ENCODE measurements at regions of chr20 and their contacts with region 1.

Region 1: GRCh38 chr20:50790651-50791277 is 4.1 kb upstream of the BCAS4 start:
- DNase-seq: peak; percentile 62 to 80 (median 77)
- ATAC-seq: peak; percentile 68
- H3K4me3 ChIP-seq: peak overlapping the region; percentile 40
- H3K4me3 Mint-ChIP-seq: peak overlapping the region in 4 of 10 donors; percentile 27 to 63 (median 39)
- H3K27ac ChIP-seq: peak overlapping the region; percentile 69
- H3K27ac Mint-ChIP-seq: peak overlapping the region in 8 of 9 donors; percentile 63 to 86 (median 78)
- H3K4me1 ChIP-seq: peaks cover 11 to 16% of the 10 kb centered on the region in 2 donors
- H3K4me1 Mint-ChIP-seq: peaks cover 0 to 28% (median 15%) of the 10 kb centered on the region in 7 donors
- H3K27me3 ChIP-seq: no peaks in the 10 kb centered on the region
- H3K27me3 Mint-ChIP-seq: no peaks in the 10 kb centered on the region

Region 2: DNA sequence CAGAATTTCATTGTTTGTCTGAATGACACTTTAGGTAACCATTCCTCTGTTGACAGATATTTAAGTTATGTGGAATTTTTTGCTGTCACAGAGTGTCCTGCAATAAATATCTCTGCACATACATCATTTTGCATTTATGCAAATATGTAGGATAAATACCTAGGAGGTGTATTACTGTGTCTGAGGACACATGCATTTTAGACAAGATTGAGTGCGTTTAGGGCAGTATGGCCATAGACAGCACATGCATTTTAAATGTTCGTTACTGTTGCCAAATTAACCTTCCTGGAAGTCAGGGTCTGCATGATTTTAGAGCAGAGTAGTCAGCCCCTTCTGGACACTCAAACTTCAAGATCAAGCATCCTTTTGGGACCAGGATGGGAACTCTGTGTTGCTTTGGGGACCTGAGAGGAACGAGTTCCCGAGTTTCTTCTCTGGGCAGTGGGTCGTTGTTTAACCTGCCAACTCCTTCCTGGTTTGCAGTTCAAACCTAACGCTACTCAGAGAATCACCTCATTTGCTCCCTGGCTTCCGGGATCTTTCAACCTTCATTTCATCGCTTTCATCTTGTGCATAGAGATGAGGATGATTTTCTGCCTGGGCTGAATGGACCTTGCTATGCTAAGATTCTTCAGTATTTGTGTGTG is 13.8 kb after region 1 on chr20:
- CTCF ChIA-PET with region 1: interaction called, 10 read pairs
- POLR2A ChIA-PET with region 1: interaction called, 9 read pairs
- intact Hi-C with region 1: loop called in 1 of 2 experiments (anchors 1 kb)
- DNase-seq: peak in 7 of 9 donors; percentile 47 to 67 (median 56)
- ATAC-seq: peak; percentile 84
- H3K4me3 ChIP-seq: peak overlapping the region; percentile 17
- H3K4me3 Mint-ChIP-seq: peak overlapping the region; percentile 38 to 83 (median 66)
- H3K27ac ChIP-seq: peak overlapping the region; percentile 64
- H3K27ac Mint-ChIP-seq: peak overlapping the region; percentile 84 to 96 (median 91)
- H3K4me1 ChIP-seq: peaks cover 15 to 16% of the 10 kb centered on the region in 2 donors
- H3K4me1 Mint-ChIP-seq: peaks cover 14 to 45% (median 44%) of the 10 kb centered on the region in 7 donors
- H3K27me3 ChIP-seq: no peaks in the 10 kb centered on the region
- H3K27me3 Mint-ChIP-seq: no peaks in the 10 kb centered on the region

Region 3: DNA sequence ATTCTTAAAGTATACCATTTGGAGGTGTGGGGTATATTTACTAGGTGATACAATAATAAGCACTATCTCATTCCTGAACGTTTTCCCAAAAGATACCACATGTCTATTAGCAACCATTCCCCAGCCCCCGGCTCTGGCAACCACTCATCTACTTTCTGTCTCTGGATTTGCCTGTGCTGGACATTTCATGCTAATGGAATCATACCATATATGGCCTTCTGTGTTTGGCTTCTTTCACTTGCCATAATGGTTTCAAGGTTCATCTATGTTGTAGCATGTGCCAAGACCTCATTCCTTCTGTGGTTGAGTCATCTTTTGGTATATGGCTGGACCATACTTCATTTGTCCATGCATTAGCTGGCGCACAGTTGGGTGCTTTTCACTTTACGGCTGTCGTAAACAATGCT is 43.8 kb after region 1 on chr20:
- CTCF ChIA-PET with region 1: interaction called, 4 read pairs
- POLR2A ChIA-PET with region 1: interaction called, 4 read pairs
- intact Hi-C with region 1: loop called in 1 of 2 experiments (anchors 5 kb)
- DNase-seq: no peak
- ATAC-seq: no peak
- H3K4me3 ChIP-seq: no peak overlapping the region
- H3K4me3 Mint-ChIP-seq: no peak overlapping the region
- H3K27ac ChIP-seq: no peak overlapping the region
- H3K27ac Mint-ChIP-seq: no peak overlapping the region
- H3K4me1 ChIP-seq: no peaks in the 10 kb centered on the region
- H3K4me1 Mint-ChIP-seq: peaks cover 0 to 12% (median 0%) of the 10 kb centered on the region in 7 donors
- H3K27me3 ChIP-seq: no peaks in the 10 kb centered on the region
- H3K27me3 Mint-ChIP-seq: no peaks in the 10 kb centered on the region

Region 4: DNA sequence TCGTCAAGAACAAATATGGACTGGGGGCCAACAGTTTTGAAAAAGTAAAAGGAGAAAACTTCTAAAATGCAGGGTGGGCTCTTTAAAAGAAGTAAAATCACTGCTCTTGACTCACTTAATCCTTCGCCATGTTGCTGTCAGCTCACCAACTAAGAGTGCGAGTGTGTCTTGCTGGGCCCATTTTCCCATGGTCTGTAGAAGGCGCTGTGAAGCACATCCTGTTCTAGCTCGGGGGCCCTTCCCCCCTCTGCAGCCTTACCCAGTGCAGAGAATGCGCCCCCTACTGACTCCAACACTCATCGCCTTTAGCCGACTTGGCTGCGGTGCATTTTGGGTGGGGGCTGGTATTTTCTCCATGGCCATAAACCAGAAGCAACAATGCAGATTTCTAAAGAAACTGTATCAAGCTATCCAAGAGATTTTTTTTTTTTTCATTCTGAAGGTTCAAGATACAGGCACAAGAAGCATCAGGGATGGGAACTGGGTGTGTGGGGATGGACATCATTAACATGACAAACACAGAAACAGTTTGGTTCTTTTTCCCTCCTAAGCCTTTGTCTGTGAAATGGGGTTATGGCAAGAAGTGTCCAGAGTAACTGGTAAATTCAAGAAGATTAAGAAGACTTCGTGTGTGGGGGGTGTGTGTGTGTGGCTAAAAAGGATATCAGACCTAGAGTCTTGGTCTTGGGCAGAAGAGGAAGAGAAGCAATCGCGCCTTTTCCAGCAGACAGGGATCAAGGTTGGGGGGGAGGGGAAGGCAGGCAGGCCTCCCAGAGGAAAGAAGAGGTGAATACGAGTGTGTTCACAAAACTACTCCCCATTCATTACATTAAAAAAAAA is 138.8 kb after region 1 on chr20:
- CTCF ChIA-PET with region 1: interaction called, 147 read pairs
- POLR2A ChIA-PET with region 1: interaction called, 79 read pairs
- intact Hi-C with region 1: loop called (anchors 1 kb)
- DNase-seq: peak; percentile 74 to 95 (median 93)
- ATAC-seq: peak; percentile 84
- H3K4me3 ChIP-seq: peak overlapping the region; percentile 52
- H3K4me3 Mint-ChIP-seq: peak overlapping the region; percentile 88 to 98 (median 94)
- H3K27ac ChIP-seq: peak overlapping the region; percentile 63
- H3K27ac Mint-ChIP-seq: peak overlapping the region; percentile 85 to 99 (median 96)
- H3K4me1 ChIP-seq: peaks cover 37 to 38% of the 10 kb centered on the region in 2 donors
- H3K4me1 Mint-ChIP-seq: peaks cover 37 to 62% (median 57%) of the 10 kb centered on the region in 7 donors
- H3K27me3 ChIP-seq: no peaks in the 10 kb centered on the region
- H3K27me3 Mint-ChIP-seq: no peaks in the 10 kb centered on the region

Region 5: GRCh38 chr20:50980851-50981713 is 190.3 kb after region 1 on chr20:
- CTCF ChIA-PET with region 1: interaction called, 3 read pairs
- POLR2A ChIA-PET with region 1: interaction called, 3 read pairs
- intact Hi-C with region 1: loop called (anchors 1 to 2 kb)
- DNase-seq: peak; percentile 20 to 61 (median 47)
- ATAC-seq: peak; percentile 67
- H3K4me3 ChIP-seq: no peak overlapping the region
- H3K4me3 Mint-ChIP-seq: peak overlapping the region in 2 of 10 donors; percentile 34 to 47
- H3K27ac ChIP-seq: no peak overlapping the region
- H3K27ac Mint-ChIP-seq: no peak overlapping the region
- H3K4me1 ChIP-seq: peaks cover 0 to 5% of the 10 kb centered on the region in 2 donors
- H3K4me1 Mint-ChIP-seq: peaks cover 0 to 9% (median 4%) of the 10 kb centered on the region in 7 donors
- H3K27me3 ChIP-seq: peaks cover 0 to 3% of the 10 kb centered on the region in 2 donors
- H3K27me3 Mint-ChIP-seq: peaks cover 21 to 52% (median 35%) of the 10 kb centered on the region in 5 donors

Region 6: DNA sequence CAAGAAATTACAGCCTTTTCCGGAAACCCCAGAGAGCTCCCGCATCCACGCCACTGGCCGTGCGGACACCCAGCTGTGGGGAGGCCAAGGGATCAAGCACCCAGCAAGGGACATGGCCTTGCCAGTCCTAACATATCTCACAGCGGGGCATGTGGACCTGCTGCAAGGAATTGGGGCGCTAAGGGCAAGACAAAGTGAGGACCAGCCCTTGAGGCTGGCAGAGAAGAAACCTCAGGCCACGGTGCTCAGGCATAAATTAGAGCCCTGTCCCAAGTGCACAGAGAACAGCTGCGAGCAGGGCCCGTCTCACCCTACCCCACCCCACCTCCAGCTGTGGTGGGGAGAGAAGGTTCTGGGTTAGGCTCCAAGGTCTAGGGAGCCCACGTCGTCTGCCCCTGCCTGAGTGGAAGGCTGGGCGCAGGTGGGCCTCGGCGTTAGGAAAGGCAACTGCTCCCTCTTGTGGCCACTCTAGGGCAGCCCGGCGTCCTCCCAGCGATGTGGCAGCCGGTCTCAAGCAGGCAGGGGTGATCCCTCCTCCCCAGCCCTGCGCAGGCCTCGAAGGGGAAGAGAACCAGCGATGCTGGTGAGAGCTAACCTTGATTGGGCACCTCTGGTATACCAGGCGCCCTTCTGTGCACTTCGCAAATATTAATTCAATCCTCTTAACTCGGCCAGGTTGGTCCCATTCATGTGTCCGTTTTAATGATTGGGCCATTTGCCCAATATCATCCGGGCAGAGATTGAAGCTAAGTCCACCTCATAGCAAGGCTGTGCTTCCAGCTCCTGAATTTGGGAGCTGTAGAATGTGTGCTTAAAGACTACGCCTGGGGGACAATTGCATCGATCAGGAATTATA is 516.0 kb after region 1 on chr20:
- CTCF ChIA-PET with region 1: interaction called, 8 read pairs
- POLR2A ChIA-PET with region 1: no interaction called
- intact Hi-C with region 1: loop called (anchors 1 to 2 kb)
- DNase-seq: peak; percentile 39 to 74 (median 53)
- ATAC-seq: peak; percentile 87
- H3K4me3 ChIP-seq: no peak overlapping the region
- H3K4me3 Mint-ChIP-seq: no peak overlapping the region
- H3K27ac ChIP-seq: no peak overlapping the region
- H3K27ac Mint-ChIP-seq: no peak overlapping the region
- H3K4me1 ChIP-seq: peaks cover 0 to 4% of the 10 kb centered on the region in 2 donors
- H3K4me1 Mint-ChIP-seq: peaks cover 0 to 5% (median 0%) of the 10 kb centered on the region in 7 donors
- H3K27me3 ChIP-seq: no peaks in the 10 kb centered on the region
- H3K27me3 Mint-ChIP-seq: peaks cover 8 to 25% (median 21%) of the 10 kb centered on the region in 5 donors